Activated naive CD8-positive, alpha-beta T cell treated with anti-CD3 and anti-CD28 coated beads, Interleukin-2, amount 10 ng/mL, durations not matched to agents 7 days and 5 days (primary cell): ENCODE measurements at regions of chr1 and their contacts with region 1.

Region 1: DNA sequence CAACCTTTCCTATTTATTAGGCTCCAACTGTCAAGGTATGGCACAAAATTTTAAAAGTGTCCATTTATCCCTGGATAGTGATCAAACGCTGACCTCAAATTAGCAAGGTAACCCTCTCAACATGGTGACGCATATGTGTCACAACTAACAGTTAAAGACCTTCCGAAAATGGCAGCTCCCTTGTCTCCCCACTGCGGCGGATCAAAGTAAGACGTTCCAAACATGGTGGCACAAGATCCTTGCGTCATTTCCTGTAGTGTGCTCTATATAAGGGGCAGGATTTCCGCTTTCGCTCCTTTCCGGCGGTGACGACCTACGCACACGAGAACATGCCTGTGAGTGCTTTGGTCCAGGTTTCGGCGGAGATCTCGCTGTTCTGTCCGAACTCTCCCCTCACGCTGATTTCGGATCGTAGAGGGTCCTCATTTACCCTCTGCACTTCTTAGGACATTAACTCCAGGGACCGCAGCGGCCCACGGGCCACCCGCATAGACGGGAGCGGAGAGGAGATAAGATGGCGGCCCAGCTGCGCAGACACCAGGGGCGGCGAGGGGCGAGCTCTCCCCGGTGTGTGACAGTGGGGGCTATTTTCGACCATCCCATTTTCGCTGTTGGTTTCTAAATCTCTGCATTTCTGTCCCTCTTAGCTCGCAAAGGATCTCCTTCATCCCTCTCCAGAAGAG is at the start of gene RPS27:
- DNase-seq: peak; percentile 84
- ATAC-seq: peak; percentile 83
- H3K4me3 Mint-ChIP-seq: peak within 1 kb of the TSS; percentile 93
- H3K27ac Mint-ChIP-seq: peak within 1 kb of the TSS; percentile 98
- H3K4me1 Mint-ChIP-seq: peaks cover 39% of the 10 kb centered on the region
- H3K27me3 Mint-ChIP-seq: no peaks in the 10 kb centered on the region
- total RNA-seq, gene RPS27: 3,346 to 3,734 TPM

Region 2: GRCh38 chr1:153775458-153776327 is 214.9 kb before region 1 on chr1:
- POLR2A ChIA-PET with region 1: interaction called, 10 read pairs
- DNase-seq: peak; percentile 81
- ATAC-seq: peak; percentile 69
- H3K4me3 Mint-ChIP-seq: peak overlapping the region; percentile 94
- H3K27ac Mint-ChIP-seq: peak overlapping the region; percentile 92
- H3K4me1 Mint-ChIP-seq: peaks cover 33% of the 10 kb centered on the region
- H3K27me3 Mint-ChIP-seq: no peaks in the 10 kb centered on the region

Region 3: GRCh38 chr1:153934746-153935145 is 55.9 kb before region 1 on chr1:
- POLR2A ChIA-PET with region 1: no interaction called
- DNase-seq: peak; percentile 18
- ATAC-seq: no peak
- H3K4me3 Mint-ChIP-seq: no peak overlapping the region
- H3K27ac Mint-ChIP-seq: no peak overlapping the region
- H3K4me1 Mint-ChIP-seq: peaks cover 3% of the 10 kb centered on the region
- H3K27me3 Mint-ChIP-seq: no peaks in the 10 kb centered on the region

Region 4: DNA sequence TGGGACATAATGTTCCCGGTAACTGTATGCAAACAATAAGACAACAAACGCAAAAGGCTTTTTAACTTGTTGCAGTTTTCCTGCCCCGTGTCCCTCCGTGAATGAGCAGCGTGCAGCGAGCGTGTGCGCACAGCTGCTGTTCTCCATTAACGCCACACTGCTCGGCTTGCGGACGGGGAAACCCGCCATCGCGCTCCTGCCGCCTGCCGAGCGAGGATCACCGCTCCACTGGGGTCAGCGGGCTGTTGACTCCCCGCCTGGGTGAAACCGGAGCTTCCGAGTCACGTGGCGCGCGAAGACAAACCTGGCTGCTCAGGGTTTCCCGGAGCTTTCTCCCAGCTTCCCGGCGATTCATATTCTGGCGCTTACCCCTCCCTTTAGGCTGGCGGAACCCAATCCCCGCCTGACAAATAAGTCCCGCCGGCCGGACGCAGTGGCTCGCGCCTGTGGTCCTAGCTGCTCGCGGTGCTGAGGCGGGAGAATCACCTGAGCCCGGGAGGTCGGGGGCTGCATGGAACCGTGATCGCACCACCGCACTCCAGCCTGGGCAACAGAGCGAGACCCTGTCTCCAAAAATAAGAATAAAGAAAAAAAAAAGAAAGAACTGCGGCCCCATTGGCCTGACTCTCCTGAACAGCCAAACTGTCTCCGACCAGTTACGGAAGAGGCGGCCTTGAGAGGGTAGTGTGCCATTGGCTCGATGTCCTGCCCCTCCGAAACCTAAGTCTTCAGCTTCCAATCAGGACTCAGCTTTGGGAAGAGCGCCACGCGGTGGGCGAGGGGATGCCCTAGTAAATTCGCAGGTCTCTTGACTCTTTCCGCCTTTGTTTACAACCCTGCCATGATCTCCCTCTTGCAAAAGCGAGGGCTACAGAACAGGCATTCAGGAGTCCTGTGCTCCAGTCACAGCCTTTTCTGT is 23.3 kb before region 1 on chr1 and contains the start of gene CREB3L4:
- POLR2A ChIA-PET with region 1: interaction called, 29 read pairs
- DNase-seq: peak; percentile 80
- ATAC-seq: peak; percentile 87
- H3K4me3 Mint-ChIP-seq: peak within 1 kb of the TSS; percentile 96
- H3K27ac Mint-ChIP-seq: peak within 1 kb of the TSS; percentile 95
- H3K4me1 Mint-ChIP-seq: peaks cover 51% of the 10 kb centered on the region
- H3K27me3 Mint-ChIP-seq: no peaks in the 10 kb centered on the region
- total RNA-seq, gene CREB3L4: 8.2 to 10.0 TPM

Region 5: GRCh38 chr1:154157520-154158306 is 167.1 kb after region 1 on chr1:
- POLR2A ChIA-PET with region 1: interaction called, 27 read pairs
- DNase-seq: peak; percentile 48
- ATAC-seq: peak; percentile 98
- H3K4me3 Mint-ChIP-seq: peak overlapping the region; percentile 77
- H3K27ac Mint-ChIP-seq: peak overlapping the region; percentile 93
- H3K4me1 Mint-ChIP-seq: peaks cover 51% of the 10 kb centered on the region
- H3K27me3 Mint-ChIP-seq: no peaks in the 10 kb centered on the region

Region 6: DNA sequence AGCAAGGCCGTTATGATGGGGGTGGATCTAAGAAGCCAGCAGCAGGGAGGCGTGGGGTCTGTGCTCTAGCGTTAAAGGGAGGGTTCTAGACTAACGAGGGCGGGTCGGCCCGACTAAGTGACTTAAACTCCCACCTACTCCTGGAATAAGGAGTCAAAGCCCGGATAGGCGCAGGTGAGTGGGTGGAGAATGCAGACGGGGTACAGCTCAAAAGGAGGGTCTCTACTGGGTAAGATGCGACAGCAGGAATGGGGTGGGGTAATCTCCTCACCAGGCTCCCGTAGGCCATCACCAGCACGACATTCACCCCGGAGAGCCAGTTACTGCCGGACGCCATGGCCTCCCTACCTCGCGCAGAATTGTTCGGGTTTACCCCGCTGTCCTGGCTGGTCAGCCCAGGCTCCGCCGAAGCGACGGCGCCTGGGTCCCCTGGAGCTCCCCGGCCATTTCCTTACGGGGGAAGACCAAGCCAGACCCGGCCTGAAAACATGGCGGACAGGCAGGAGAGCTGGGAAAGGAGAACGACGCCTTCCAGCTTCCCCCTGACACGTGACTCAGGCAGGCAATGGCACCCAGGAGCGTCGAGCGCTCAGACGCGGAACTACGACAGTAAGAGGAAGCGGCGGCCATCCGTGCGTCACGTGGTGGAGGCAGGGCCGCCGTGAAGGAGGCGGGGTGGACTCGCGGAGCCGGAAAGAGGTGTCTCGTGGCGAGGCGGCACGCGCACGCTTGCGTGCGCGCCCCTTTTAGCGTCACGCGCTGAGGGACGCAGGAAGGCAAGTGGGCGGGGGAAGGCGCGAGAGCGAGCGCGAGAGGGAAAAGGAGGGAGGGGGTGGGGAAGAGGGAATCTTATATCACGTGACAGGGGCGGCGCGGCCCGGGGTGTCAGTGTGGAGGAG is 229.7 kb after region 1 on chr1 and contains the start of gene UBAP2L:
- POLR2A ChIA-PET with region 1: interaction called, 15 read pairs
- DNase-seq: peak; percentile 98
- ATAC-seq: peak; percentile 88
- H3K4me3 Mint-ChIP-seq: peak within 1 kb of the TSS; percentile 88
- H3K27ac Mint-ChIP-seq: peak within 1 kb of the TSS; percentile 95
- H3K4me1 Mint-ChIP-seq: peaks cover 57% of the 10 kb centered on the region
- H3K27me3 Mint-ChIP-seq: no peaks in the 10 kb centered on the region
- total RNA-seq, gene UBAP2L: 192 to 195 TPM